Activated CD8-positive, alpha-beta T cell treated with anti-CD3 and anti-CD28 coated beads for 36 hours (primary cell): ENCODE measurements at regions of chr14 and their contacts with region 1.

Region 1: DNA sequence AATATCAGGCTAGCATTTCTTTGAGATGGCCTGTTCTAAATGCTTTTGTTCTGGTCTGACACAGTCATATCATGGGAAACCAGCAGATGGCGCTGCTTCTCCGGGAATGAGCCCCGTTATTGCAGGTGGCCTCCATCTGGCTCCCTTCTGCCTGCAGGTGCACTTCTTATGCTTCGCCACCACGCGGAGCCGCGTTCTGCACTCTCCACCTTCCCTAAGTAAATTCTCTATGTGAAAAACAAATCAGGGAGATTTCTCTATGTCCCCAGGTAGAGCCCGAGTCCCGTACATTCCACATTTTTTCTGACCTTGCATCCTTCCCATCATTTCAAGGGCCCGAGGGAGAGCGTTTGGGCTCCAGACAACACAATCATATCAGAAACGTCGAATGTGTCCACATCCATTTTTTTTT is 26.2 kb downstream of the GLRX5 start:
- DNase-seq: peak; percentile 94
- ATAC-seq: peak; percentile 100
- H3K4me3 Mint-ChIP-seq: no peak overlapping the region
- H3K27ac Mint-ChIP-seq: no peak overlapping the region
- H3K4me1 Mint-ChIP-seq: peaks cover 2% of the 10 kb centered on the region
- H3K27me3 Mint-ChIP-seq: peaks cover 3% of the 10 kb centered on the region
- CTCF ChIP-seq: peak; percentile 97

Region 2: GRCh38 chr14:95774265-95775160 is 213.5 kb after region 1 on chr14:
- CTCF ChIA-PET with region 1: interaction called, 27 read pairs
- POLR2A ChIA-PET with region 1: no interaction called
- intact Hi-C with region 1: loop called (anchors 2 kb)
- DNase-seq: peak; percentile 70
- ATAC-seq: peak; percentile 39
- H3K4me3 Mint-ChIP-seq: no peak overlapping the region
- H3K27ac Mint-ChIP-seq: no peak overlapping the region
- H3K4me1 Mint-ChIP-seq: no peaks in the 10 kb centered on the region
- H3K27me3 Mint-ChIP-seq: peaks cover 11% of the 10 kb centered on the region
- CTCF ChIP-seq: peak; percentile 97

Region 3: DNA sequence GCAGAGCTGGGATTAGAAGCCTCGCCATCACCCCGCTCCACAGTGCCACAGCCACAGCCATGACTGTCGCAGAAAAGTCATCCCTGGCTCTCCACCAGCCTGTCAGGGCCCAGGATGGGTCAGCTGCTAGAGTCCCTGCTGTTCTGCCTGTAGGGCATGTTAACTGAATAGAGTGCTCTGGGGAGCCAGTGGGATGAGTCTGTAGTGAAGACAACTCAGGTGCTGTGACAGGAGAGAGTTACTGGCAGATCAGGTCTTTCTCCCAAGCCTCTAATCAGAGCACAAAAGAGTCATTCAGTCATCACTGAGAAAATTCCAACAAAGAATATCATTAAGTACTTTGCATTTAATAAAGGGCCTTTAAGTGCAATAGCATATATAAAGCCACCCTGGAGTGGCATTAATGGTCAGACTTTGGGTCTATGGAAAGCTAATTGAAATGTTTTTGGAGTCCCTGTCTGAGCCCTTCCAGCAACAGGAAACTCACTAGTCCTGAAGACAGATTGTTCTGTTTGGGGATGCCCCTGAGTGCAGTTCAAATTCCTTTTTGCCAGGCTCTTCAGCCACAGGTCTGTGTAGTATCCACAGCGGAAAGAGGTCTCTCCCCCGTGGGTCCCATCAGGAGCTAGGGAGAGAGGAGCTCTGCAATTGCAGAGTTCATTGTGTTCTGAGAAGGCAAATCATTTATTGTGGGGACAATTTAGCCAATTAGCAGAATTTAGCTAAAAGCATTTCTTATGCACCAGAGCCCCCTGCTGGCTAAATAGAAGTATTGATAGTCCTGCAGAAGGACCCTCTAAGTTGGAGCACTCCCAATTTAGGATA is 433.0 kb after region 1 on chr14:
- CTCF ChIA-PET with region 1: interaction called, 33 read pairs
- POLR2A ChIA-PET with region 1: no interaction called
- intact Hi-C with region 1: loop called (anchors 2 kb)
- DNase-seq: peak; percentile 31
- ATAC-seq: no peak
- H3K4me3 Mint-ChIP-seq: no peak overlapping the region
- H3K27ac Mint-ChIP-seq: no peak overlapping the region
- H3K4me1 Mint-ChIP-seq: no peaks in the 10 kb centered on the region
- H3K27me3 Mint-ChIP-seq: peaks cover 31% of the 10 kb centered on the region
- CTCF ChIP-seq: peak; percentile 86